CD4-positive, alpha-beta T cell (primary cell): ENCODE measurements at regions of chr4 and their contacts with region 1.

Region 1: DNA sequence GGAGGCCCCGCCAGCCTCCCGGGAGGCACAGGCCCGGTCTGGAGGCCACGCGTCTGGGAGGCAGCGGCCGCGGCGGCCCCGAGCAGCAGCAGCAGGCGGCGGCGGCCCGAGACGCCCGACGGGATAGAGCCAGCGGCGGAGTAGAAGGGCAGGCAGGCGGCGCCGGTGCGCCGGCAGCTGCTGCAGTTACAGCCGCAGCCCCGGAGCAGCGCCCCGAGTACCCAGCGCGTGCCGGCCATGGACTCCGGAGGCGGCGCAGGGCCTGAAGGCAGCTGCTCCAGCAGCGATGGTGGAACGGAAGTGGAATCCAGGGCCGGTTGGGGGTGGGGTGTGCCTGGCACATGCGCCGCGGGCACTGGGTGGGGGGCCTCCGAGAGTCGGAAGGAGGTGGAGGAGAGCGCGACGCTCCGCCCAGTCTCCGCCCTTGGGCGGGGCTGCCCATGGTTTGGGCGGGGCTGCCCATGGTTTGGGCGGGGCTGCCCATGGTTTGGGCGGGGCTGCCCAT is at the start of gene GRSF1:
- DNase-seq: peak; percentile 92 to 97 (median 94)
- ATAC-seq: peak; percentile 91
- H3K4me3 ChIP-seq: peak within 1 kb of the TSS; percentile 73
- H3K4me3 Mint-ChIP-seq: peak within 1 kb of the TSS; percentile 100
- H3K27ac ChIP-seq: peak within 1 kb of the TSS; percentile 69 to 73
- H3K27ac Mint-ChIP-seq: peak within 1 kb of the TSS; percentile 93
- H3K4me1 ChIP-seq: peaks cover 35% of the 10 kb centered on the region
- H3K4me1 Mint-ChIP-seq: peaks cover 34% of the 10 kb centered on the region
- H3K27me3 ChIP-seq: no peaks in the 10 kb centered on the region
- H3K27me3 Mint-ChIP-seq: no peaks in the 10 kb centered on the region
- CTCF ChIP-seq: no peak
- total RNA-seq, gene GRSF1: 32.7 to 34.1 TPM

Region 2: GRCh38 chr4:70531981-70532380 is 307.7 kb before region 1 on chr4:
- CTCF ChIA-PET with region 1: no interaction called
- POLR2A ChIA-PET with region 1: no interaction called
- intact Hi-C with region 1: no loop called
- DNase-seq: no peak
- ATAC-seq: no peak
- H3K4me3 ChIP-seq: no peak overlapping the region
- H3K4me3 Mint-ChIP-seq: no peak overlapping the region
- H3K27ac ChIP-seq: no peak overlapping the region
- H3K27ac Mint-ChIP-seq: no peak overlapping the region
- H3K4me1 ChIP-seq: no peaks in the 10 kb centered on the region
- H3K4me1 Mint-ChIP-seq: no peaks in the 10 kb centered on the region
- H3K27me3 ChIP-seq: peaks cover 0 to 4% of the 10 kb centered on the region in 2 experiments
- H3K27me3 Mint-ChIP-seq: peaks cover 36% of the 10 kb centered on the region
- CTCF ChIP-seq: no peak

Region 3: DNA sequence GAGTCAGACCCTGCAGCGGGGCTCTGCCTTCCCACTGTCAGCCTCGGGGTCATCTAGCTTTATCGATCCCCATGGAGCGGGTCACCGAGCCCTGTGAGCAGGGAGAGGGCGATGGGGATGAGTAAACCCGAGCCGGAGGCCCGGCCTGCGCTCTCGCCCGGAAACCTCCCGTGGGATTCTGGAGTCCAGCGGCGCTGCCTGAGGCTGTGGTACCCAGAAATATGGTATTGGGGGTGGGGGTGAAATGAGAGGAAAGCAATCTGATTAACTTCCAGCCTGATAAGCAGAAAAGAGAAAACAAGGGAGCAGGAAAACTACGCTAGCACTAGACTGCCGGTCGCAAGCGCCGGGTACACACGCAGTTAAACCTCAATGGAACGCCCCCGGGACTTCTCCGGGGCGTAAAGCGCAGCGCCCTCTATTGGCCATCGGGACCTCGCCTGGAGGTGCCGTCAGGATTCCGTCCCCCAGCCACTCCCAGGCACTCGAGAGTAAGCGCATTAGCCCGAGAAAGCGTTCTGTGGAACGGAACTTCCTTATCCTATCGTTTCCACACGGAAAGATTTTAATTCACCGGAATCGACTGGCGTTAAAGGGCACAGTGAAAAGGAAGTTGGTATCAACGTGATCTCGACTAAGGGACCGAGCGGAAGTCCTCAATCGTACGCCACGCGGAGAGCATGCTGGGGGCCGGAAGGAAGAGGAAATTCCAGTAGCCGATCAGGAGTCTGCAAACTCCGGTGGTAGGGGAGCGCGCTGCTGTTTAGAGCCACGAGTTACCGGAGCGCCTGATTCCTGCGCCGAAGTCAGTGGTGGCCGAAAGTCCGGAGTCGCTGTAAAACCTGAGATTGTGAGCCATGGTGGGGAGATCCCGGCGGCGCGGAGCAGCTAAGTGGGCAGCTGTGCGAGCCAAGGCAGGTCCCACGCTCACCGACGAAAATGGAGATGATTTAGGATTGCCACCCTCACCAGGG is 151.5 kb before region 1 on chr4 and contains the start of gene UTP3:
- CTCF ChIA-PET with region 1: no interaction called
- POLR2A ChIA-PET with region 1: interaction called, 23 read pairs
- intact Hi-C with region 1: loop called (anchors 2 kb)
- DNase-seq: peak; percentile 87 to 98 (median 90)
- ATAC-seq: peak; percentile 87
- H3K4me3 ChIP-seq: peak within 1 kb of the TSS; percentile 74
- H3K4me3 Mint-ChIP-seq: peak within 1 kb of the TSS; percentile 91
- H3K27ac ChIP-seq: peak within 1 kb of the TSS; percentile 94 to 97
- H3K27ac Mint-ChIP-seq: peak within 1 kb of the TSS; percentile 99
- H3K4me1 ChIP-seq: peaks cover 26% of the 10 kb centered on the region
- H3K4me1 Mint-ChIP-seq: peaks cover 45% of the 10 kb centered on the region
- H3K27me3 ChIP-seq: no peaks in the 10 kb centered on the region
- H3K27me3 Mint-ChIP-seq: no peaks in the 10 kb centered on the region
- CTCF ChIP-seq: peak; percentile 98
- total RNA-seq, gene UTP3: 19.2 to 20.5 TPM

Region 4: DNA sequence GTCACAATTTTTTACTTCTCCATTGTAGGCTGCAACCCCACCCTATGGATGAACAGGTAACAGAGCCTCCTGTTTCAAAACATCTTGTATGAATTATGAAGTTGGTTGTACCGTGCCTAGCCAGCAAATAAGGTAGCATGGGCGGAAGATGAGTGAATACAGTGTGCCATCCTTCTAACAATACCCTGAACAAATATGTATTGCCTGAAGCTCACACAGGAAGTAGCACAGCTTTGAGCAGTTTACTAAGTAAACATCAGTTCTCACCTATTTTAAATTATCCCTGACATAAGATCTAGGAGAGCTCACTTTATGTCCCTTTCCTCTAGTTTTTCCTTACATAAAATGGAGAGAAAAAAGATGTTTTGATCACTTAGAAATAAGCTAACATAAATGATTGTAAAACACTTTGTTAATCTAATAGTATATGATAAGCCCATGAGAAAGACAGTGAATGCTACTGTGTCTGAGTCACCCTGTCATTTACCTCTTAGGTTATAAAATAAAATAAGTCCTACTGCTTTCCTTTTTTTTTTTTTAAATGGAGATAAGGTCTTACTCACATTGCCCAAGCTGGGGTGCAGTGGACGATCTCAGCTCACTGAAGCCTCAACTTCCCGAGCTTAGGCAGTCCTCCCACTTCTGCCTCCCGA is 36.6 kb before region 1 on chr4:
- CTCF ChIA-PET with region 1: no interaction called
- POLR2A ChIA-PET with region 1: interaction called, 12 read pairs
- intact Hi-C with region 1: no loop called
- DNase-seq: no peak
- ATAC-seq: peak; percentile 44
- H3K4me3 ChIP-seq: no peak overlapping the region
- H3K4me3 Mint-ChIP-seq: no peak overlapping the region
- H3K27ac ChIP-seq: no peak overlapping the region
- H3K27ac Mint-ChIP-seq: peak overlapping the region; percentile 10
- H3K4me1 ChIP-seq: peaks cover 2% of the 10 kb centered on the region
- H3K4me1 Mint-ChIP-seq: peaks cover 22% of the 10 kb centered on the region
- H3K27me3 ChIP-seq: no peaks in the 10 kb centered on the region
- H3K27me3 Mint-ChIP-seq: no peaks in the 10 kb centered on the region
- CTCF ChIP-seq: no peak

Region 5: GRCh38 chr4:70901984-70902576 is 62.4 kb after region 1 on chr4 and contains the start of gene MOB1B:
- CTCF ChIA-PET with region 1: interaction called, 7 read pairs
- POLR2A ChIA-PET with region 1: interaction called, 20 read pairs
- intact Hi-C with region 1: loop called (anchors 2 to 5 kb)
- DNase-seq: peak; percentile 69 to 92 (median 82)
- ATAC-seq: peak; percentile 97
- H3K4me3 ChIP-seq: peak within 1 kb of the TSS; percentile 74
- H3K4me3 Mint-ChIP-seq: peak within 1 kb of the TSS; percentile 100
- H3K27ac ChIP-seq: peak within 1 kb of the TSS in 1 of 2 donors; percentile 16
- H3K27ac Mint-ChIP-seq: peak within 1 kb of the TSS; percentile 85
- H3K4me1 ChIP-seq: peaks cover 16% of the 10 kb centered on the region
- H3K4me1 Mint-ChIP-seq: peaks cover 48% of the 10 kb centered on the region
- H3K27me3 ChIP-seq: no peaks in the 10 kb centered on the region
- H3K27me3 Mint-ChIP-seq: no peaks in the 10 kb centered on the region
- CTCF ChIP-seq: peak; percentile 27
- total RNA-seq, gene MOB1B: 13.1 to 13.4 TPM

Region 6: DNA sequence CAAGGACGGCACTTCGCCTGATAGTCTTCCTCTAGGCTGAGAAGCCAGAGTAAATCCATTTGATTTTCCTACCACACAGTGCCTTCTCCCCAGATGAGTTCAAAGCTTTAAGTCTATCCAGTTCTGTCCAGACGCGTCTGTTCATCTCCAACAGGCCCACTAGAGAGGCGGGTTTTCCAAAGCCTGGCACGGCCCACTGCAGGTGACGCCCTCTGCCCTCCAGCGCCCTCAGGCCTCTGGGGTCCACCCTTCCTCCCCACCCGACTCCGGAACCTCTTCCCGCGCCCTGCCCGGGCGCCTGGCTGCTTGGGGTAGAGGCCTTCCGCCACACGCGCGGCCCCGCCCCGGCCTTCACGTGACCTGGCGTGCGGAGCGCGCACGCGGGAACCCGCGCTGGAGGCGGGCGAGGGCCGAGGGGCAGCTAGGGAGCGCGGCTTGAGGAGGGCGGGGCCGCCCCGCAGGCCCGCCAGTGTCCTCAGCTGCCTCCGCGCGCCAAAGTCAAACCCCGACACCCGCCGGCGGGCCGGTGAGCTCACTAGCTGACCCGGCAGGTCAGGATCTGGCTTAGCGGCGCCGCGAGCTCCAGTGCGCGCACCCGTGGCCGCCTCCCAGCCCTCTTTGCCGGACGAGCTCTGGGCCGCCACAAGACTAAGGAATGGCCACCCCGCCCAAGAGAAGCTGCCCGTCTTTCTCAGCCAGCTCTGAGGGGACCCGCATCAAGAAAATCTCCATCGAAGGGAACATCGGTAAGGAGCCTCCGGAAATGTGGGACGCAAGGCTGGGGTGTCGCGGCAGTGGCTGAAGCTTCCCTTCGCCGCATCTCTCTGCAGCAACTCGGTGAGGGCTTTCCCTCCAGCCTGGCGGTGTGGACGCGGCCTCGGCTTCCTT is 153.8 kb after region 1 on chr4 and contains the start of gene DCK:
- CTCF ChIA-PET with region 1: no interaction called
- POLR2A ChIA-PET with region 1: interaction called, 17 read pairs
- intact Hi-C with region 1: loop called (anchors 5 to 10 kb)
- DNase-seq: peak; percentile 64 to 93 (median 79)
- ATAC-seq: peak; percentile 77
- H3K4me3 ChIP-seq: peak within 1 kb of the TSS; percentile 95
- H3K4me3 Mint-ChIP-seq: peak within 1 kb of the TSS; percentile 93
- H3K27ac ChIP-seq: peak within 1 kb of the TSS; percentile 82
- H3K27ac Mint-ChIP-seq: peak within 1 kb of the TSS; percentile 85
- H3K4me1 ChIP-seq: peaks cover 20% of the 10 kb centered on the region
- H3K4me1 Mint-ChIP-seq: peaks cover 59% of the 10 kb centered on the region
- H3K27me3 ChIP-seq: no peaks in the 10 kb centered on the region
- H3K27me3 Mint-ChIP-seq: no peaks in the 10 kb centered on the region
- CTCF ChIP-seq: no peak
- total RNA-seq, gene DCK: 12.8 to 13.9 TPM